ENCODE measurements at regions of chr22 and their contacts with region 1.

Region 1: DNA sequence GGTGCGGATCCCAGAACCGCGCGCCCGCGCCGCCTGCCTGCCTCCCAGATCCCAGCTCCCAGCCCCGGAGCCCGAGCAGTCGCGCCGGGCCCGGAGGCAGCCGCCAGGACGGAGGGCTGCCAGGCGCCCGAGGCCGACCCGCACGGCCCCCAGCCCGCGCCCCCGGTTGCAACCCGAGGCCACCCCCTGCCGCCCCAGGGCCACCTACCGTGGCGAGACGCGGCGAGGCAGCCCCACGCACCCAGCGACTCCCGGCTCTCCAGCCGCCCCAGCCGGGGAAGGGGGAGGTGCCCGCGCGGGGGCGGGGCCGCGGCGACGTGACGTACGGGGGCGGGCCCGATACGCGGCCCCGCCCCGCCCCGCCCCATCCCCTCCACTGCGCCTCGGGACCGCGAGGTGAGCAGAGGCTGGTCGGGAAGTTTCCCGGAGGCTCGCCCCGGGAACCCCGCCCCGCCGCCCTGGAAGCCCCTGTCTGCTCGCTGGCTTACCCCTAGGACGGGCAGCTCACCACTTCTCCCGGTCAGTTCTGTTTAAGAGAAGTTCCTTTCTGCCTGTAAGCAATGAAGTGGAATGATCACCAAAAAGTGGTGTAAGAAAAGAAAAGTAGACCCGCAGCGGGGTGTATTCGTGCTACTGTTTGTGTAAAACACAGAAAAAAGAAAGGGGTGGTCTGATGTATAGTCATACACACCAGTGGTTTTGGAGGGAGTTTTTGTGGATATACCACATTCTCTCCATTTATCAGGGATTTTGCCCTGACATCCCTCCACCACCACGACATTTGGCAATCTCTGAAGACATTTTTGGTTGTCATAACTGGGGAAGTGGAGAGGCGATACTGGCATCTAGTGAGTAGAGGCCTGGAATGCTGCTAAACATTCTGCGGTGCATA is at the start of gene TPST2:
- DNase-seq: peak; percentile 87
- ATAC-seq: peak; percentile 96
- total RNA-seq, gene TPST2: 30.1 TPM

Region 2: DNA sequence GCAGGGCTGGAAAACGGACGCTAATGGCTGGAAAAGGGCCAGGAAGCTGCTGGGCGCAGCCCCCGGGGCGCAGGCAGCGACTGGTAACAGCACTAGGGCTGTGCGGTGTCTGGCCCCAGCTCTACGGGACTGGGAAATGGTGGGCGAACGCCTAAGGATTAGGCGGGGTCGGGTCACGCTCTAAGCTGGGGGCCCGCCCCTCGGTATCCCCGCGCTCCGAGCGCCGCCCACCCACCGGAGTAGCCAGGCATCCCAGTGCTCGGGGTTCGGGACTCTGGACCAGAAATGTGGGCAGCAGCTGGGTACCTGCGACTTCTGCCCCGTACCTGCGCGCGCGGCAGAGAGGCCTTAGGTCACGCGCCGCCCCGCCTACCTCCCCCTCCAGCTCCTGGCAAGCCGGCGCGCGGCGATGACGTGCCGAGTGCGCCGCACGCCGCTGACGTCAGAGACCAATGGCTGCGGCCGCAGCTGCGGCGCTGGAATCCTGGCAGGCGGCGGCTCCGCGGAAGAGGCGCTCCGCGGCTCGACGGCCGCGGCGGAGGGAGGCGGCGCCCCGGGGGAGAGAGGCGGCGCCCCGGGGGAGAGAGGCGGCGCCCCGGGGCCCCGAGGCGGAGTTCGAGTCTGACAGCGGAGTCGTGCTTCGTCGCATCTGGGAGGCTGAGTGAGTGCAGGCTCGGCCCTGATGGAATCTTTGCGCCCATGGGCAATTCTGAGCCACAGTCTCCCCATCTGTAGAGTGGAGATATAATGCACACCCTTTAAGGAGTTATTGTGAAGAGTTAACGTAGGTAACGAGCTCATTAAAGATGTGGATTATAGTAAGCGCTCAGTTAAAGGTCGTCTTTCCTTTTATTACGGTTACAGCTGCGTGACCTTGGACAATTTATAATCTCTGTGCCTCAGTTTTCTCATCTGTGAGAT is 106.4 kb before region 1 on chr22 and contains the starts of genes HPS4 and SRRD:
- intact Hi-C with region 1: loop called (anchors 5 kb)
- DNase-seq: peak; percentile 95
- ATAC-seq: peak; percentile 98
- total RNA-seq, gene HPS4: 8.3 TPM
- total RNA-seq, gene SRRD: 23.2 TPM

Region 3: GRCh38 chr22:26511857-26512793 is 78.0 kb before region 1 on chr22 and contains the start of gene TFIP11:
- intact Hi-C with region 1: loop called (anchors 5 kb)
- DNase-seq: peak; percentile 98
- ATAC-seq: peak; percentile 100
- total RNA-seq, gene TFIP11: 23.9 TPM

Measured in Right ventricle myocardium superior (tissue), 1 donor.